MCF 10A (cell line): ENCODE measurements at regions of chr5 and their contacts with region 1.

Region 1: GRCh38 chr5:91151947-91152346 is 231.2 kb downstream of the ARRDC3 start:
- DNase-seq: peak; percentile 96
- H3K4me3 Mint-ChIP-seq: no peak overlapping the region
- H3K27ac Mint-ChIP-seq: no peak overlapping the region
- H3K4me1 Mint-ChIP-seq: peaks cover 19% of the 10 kb centered on the region
- H3K27me3 Mint-ChIP-seq: no peaks in the 10 kb centered on the region
- CTCF ChIP-seq: no peak

Region 2: GRCh38 chr5:91162534-91163381 is 10.8 kb after region 1 on chr5:
- CTCF ChIA-PET with region 1: no interaction called
- POLR2A ChIA-PET with region 1: interaction called, 13 read pairs
- intact Hi-C with region 1: no loop called
- DNase-seq: peak; percentile 96
- H3K4me3 Mint-ChIP-seq: peak overlapping the region; percentile 10
- H3K27ac Mint-ChIP-seq: peak overlapping the region; percentile 68
- H3K4me1 Mint-ChIP-seq: peaks cover 19% of the 10 kb centered on the region
- H3K27me3 Mint-ChIP-seq: no peaks in the 10 kb centered on the region
- CTCF ChIP-seq: no peak

Region 3: GRCh38 chr5:91194824-91195381 is 43.0 kb after region 1 on chr5:
- CTCF ChIA-PET with region 1: interaction called, 3 read pairs
- POLR2A ChIA-PET with region 1: no interaction called
- intact Hi-C with region 1: loop called (anchors 5 kb)
- DNase-seq: no peak
- H3K4me3 Mint-ChIP-seq: no peak overlapping the region
- H3K27ac Mint-ChIP-seq: no peak overlapping the region
- H3K4me1 Mint-ChIP-seq: peaks cover 4% of the 10 kb centered on the region
- H3K27me3 Mint-ChIP-seq: no peaks in the 10 kb centered on the region
- CTCF ChIP-seq: no peak